ENCODE measurements at regions of chr4 and their contacts with region 1.

Region 1: DNA sequence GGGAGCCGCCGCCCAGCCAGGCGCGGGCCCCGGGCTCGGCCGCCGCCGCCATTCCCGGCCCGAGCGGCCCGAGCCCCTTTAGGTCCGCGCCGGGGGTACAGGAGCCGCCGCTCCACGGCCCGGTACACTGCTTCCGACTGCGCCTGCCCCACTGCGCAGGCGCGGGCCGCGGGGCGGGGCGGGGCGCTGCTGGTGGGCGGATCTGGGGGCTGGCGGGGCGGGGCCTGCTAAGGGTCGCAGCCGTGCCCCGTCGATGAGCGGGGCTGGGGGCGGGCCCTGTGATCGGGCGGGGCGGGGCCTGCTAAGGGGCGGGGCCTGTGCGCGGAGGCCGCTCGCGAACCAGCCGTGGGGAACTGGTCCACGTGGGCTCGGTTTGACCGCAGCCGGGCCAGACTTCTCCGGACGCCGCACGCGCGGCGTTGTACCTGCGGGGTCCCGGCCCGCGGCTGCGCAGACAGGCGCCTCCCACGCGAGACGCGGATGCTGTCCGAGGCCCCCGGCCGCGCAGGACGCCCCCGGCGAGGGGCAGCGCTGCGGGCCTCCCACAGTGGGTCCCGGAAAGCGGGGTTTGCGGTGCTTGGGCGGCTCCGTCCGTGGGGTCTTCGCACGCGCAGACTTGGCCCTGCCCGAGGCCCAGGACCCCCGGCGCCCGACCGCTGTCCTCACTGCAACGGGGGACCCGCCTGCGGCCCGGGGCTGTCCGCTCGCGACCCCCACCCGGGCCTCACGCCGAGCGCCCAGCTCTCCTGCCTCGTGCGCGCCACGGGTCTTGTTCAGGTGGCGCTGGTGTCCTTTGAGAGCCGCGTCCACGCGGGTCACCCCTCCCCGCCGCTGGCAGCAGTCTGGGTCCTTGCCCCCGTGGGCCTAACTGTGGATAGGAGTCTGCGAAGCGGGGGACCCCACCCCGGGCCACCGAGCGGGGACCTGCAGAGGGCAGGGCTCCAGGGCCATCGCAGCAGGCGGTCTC is at the start of gene DGKQ:
- DNase-seq: peak; percentile 69
- H3K4me3 ChIP-seq: peak within 1 kb of the TSS; percentile 71 to 86 (median 82)
- H3K27ac ChIP-seq: no peak within 1 kb of the TSS
- H3K4me1 ChIP-seq: peaks cover 25% of the 10 kb centered on the region
- H3K27me3 ChIP-seq: no peaks in the 10 kb centered on the region
- CTCF ChIP-seq: no peak
- total RNA-seq, gene DGKQ: 13.7 to 13.8 TPM

Region 2: GRCh38 chr4:610411-611261 is 363.1 kb before region 1 on chr4:
- CTCF ChIA-PET with region 1: no interaction called
- dilution Hi-C with region 1: loop called (anchors 10 kb)
- in situ Hi-C with region 1: no loop called
- intact Hi-C with region 1: no loop called
- DNase-seq: peak; percentile 87
- H3K4me3 ChIP-seq: no peak overlapping the region
- H3K27ac ChIP-seq: no peak overlapping the region
- H3K4me1 ChIP-seq: peaks cover 6% of the 10 kb centered on the region
- H3K27me3 ChIP-seq: no peaks in the 10 kb centered on the region
- CTCF ChIP-seq: peak in 1 of 2 donors; percentile 30

Region 3: GRCh38 chr4:891747-892146 is 82.0 kb before region 1 on chr4:
- CTCF ChIA-PET with region 1: no interaction called
- dilution Hi-C with region 1: loop called (anchors 5 kb)
- in situ Hi-C with region 1: no loop called
- intact Hi-C with region 1: no loop called
- DNase-seq: no peak
- H3K4me3 ChIP-seq: no peak overlapping the region
- H3K27ac ChIP-seq: no peak overlapping the region
- H3K4me1 ChIP-seq: no peaks in the 10 kb centered on the region
- H3K27me3 ChIP-seq: no peaks in the 10 kb centered on the region
- CTCF ChIP-seq: peak in 1 of 2 donors; percentile 28

Region 4: GRCh38 chr4:1050486-1051213 is 76.9 kb after region 1 on chr4:
- CTCF ChIA-PET with region 1: no interaction called
- dilution Hi-C with region 1: loop called (anchors 5 kb)
- in situ Hi-C with region 1: no loop called
- intact Hi-C with region 1: no loop called
- DNase-seq: no peak
- H3K4me3 ChIP-seq: no peak overlapping the region
- H3K27ac ChIP-seq: no peak overlapping the region
- H3K4me1 ChIP-seq: peaks cover 26% of the 10 kb centered on the region
- H3K27me3 ChIP-seq: peaks cover 10% of the 10 kb centered on the region
- CTCF ChIP-seq: peak in 1 of 2 donors; percentile 10

Region 5: GRCh38 chr4:1092026-1092982 is 118.6 kb after region 1 on chr4:
- CTCF ChIA-PET with region 1: no interaction called
- dilution Hi-C with region 1: loop called (anchors 5 kb)
- in situ Hi-C with region 1: no loop called
- intact Hi-C with region 1: no loop called
- DNase-seq: no peak
- H3K4me3 ChIP-seq: no peak overlapping the region
- H3K27ac ChIP-seq: no peak overlapping the region
- H3K4me1 ChIP-seq: no peaks in the 10 kb centered on the region
- H3K27me3 ChIP-seq: peaks cover 1% of the 10 kb centered on the region
- CTCF ChIP-seq: no peak

Region 6: GRCh38 chr4:1644891-1645657 is 671.4 kb after region 1 on chr4:
- CTCF ChIA-PET with region 1: no interaction called
- dilution Hi-C with region 1: loop called (anchors 5 kb)
- in situ Hi-C with region 1: no loop called
- intact Hi-C with region 1: no loop called
- DNase-seq: peak; percentile 62
- H3K4me3 ChIP-seq: no peak overlapping the region
- H3K27ac ChIP-seq: no peak overlapping the region
- H3K4me1 ChIP-seq: peaks cover 13% of the 10 kb centered on the region
- H3K27me3 ChIP-seq: peaks cover 2% of the 10 kb centered on the region
- CTCF ChIP-seq: peak in 1 of 2 donors; percentile 4